ENCODE measurements at regions of chr5 and their contacts with region 1.

Region 1: DNA sequence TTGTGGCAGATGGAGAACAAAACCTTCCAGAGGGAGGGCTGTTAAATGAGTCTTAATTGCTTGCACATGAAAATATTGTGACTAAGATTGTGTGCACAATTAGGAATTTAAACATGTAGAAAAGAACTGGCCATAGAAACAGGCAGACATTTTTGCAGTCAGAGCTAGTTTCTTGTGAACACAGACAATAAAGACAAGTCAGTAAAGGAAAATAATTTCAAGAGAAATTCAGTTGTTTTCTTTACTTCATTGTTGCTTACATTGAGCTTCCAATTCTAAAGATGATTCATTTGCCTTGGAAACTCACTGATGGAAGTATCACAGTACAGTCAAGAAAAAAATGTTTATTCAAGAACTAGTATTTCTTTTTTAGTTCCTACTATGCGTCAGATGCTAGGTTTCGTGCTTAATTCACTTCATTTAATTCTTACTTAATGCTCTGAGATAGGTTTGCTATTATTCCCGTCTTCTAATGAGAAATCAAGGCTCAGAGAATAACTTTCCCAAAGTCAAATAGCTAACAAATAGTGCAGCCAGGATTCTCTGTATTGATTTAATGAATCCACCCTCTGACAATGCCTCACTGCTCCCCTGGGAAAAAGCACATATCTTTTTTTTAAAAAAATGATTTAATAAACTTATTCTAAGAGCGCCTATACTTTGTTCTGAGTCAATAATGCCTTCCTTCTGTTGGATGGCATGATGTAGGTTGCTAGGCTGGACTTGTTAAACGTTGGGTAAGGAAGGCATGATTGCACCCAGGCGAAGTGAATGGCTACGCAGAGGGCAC is 581.4 kb downstream of the RAB3C start:
- DNase-seq: no peak
- ATAC-seq: no peak

Region 2: GRCh38 chr5:59039296-59040023 is 124.8 kb before region 1 on chr5:
- intact Hi-C with region 1: loop called in 1 of 2 experiments (anchors 2 kb)
- DNase-seq: peak; percentile 91
- ATAC-seq: peak; percentile 76 to 86

Region 3: DNA sequence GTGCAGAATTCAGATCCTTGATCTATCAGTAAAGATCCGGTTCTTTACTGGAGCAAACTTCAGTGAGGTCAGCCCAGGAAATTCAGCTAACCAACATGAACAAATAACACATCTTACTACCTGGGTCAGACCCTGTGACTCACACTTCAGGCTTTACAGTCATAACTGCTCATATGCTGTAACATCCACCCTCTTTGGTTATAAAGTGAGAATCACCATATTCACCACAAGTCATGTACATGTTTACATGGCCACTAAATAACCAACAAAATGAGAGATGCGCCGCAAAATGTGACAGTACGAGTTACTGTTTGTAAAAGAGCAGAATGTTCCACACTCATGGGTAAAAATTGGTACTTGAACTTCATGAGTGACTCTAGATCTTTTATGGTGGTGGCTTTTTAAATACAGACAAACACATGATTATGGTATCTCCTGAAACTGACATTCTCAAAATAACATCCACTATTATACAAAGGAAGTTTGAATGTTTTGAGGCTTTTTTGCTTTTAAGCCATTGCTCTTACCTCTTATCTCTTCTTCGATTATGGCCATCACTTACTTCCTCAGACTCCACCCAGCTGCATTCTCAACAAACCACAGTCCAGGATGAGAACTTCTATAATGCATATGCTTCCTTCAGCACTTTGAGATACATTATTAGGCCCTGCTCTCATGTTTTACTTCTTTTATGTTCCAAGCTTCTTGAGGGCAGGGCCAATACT is 64.8 kb before region 1 on chr5:
- intact Hi-C with region 1: loop called in 1 of 2 experiments (anchors 10 kb)
- DNase-seq: no peak
- ATAC-seq: peak in 1 of 2 donors; percentile 44

Region 4: DNA sequence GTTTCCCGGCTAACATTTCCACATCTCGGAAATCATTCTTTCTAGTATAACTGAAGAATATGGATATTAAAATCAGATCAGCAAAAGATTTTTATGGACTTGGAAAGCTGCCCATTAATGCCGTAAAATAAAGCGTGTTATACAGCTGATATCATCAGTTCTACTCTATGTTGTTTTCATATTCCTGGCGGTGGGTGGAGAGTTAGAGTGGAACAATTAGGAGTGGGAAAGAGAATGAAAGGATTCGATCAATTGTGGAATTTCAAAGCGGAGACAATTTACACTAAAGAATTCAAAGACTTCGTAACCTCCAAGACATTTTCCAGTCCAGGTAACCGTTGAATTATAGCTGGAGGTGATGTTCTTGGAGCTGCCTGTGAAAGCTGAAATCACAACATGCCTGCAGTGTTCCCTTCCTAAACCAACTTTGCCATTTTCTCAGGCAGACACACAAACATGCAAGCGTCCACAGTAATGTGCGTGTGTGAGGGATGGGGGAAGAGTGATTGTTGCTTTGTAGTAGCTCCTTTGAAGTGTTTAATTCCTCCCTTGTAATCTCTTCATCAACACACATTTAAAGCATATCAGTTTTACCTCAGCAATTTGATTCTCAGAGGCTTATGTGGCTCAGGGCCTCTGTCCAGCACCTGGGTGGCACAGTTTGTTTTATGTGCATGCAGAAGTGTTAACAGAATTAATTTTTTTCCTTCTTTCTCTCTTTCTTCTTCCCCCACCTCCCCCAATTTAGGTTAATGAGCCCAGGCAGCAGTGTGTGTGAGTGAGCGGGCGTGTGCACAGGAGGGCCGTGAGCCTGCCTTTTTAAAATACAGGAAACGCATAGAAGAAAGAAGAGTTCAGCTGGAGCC is 37.3 kb before region 1 on chr5:
- intact Hi-C with region 1: loop called in 1 of 2 experiments (anchors 5 kb)
- DNase-seq: no peak
- ATAC-seq: peak in 1 of 2 donors; percentile 2